PC-3 (cell line): ENCODE measurements at regions of chr3 and their contacts with region 1.

Region 1: GRCh38 chr3:144770915-144771351 is 799.3 kb downstream of the DIPK2A start:
- DNase-seq: peak; percentile 45
- ATAC-seq: peak; percentile 71
- H3K4me3 ChIP-seq: no peak overlapping the region
- H3K27ac ChIP-seq: no peak overlapping the region
- H3K4me1 ChIP-seq: no peaks in the 10 kb centered on the region
- H3K27me3 ChIP-seq: no peaks in the 10 kb centered on the region
- CTCF ChIP-seq: peak; percentile 54

Region 2: GRCh38 chr3:143895805-143896204 is 875.1 kb before region 1 on chr3:
- CTCF ChIA-PET with region 1: no interaction called
- POLR2A ChIA-PET with region 1: no interaction called
- intact Hi-C with region 1: loop called (anchors 1 kb)
- DNase-seq: peak; percentile 40
- ATAC-seq: no peak
- H3K4me3 ChIP-seq: no peak overlapping the region
- H3K27ac ChIP-seq: no peak overlapping the region
- H3K4me1 ChIP-seq: peaks cover 3% of the 10 kb centered on the region
- H3K27me3 ChIP-seq: no peaks in the 10 kb centered on the region
- CTCF ChIP-seq: peak; percentile 52; the same call in 1 of the 2 replicates

Region 3: GRCh38 chr3:145035682-145036081 is 264.7 kb after region 1 on chr3:
- CTCF ChIA-PET with region 1: no interaction called
- POLR2A ChIA-PET with region 1: no interaction called
- intact Hi-C with region 1: no loop called
- DNase-seq: no peak
- ATAC-seq: no peak
- H3K4me3 ChIP-seq: no peak overlapping the region
- H3K27ac ChIP-seq: no peak overlapping the region
- H3K4me1 ChIP-seq: 0 out of 2 replicates have a peak, but pooled peaks cover 3% of the 10 kb centered on the region
- H3K27me3 ChIP-seq: no peaks in the 10 kb centered on the region
- CTCF ChIP-seq: no peak

Region 4: DNA sequence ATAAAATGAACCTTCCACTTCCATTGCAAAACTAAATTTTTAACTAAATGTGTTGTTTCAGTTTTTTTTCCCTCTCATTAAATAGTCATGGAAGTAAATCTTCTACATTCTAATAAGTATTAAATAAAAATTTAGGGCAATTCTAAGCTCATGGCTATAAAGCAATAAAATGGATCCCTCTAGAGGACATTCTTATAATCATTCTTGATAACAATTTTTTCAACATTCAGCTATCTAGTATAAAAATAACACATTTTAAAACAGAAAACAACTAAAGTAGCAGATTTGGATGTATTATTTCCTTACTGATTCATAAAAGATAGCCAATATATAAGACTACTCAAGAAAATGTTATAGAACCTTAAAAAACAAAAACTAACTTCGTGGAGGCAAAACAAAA is 997.0 kb after region 1 on chr3:
- CTCF ChIA-PET with region 1: no interaction called
- POLR2A ChIA-PET with region 1: no interaction called
- intact Hi-C with region 1: loop called (anchors 10 kb)
- DNase-seq: peak; percentile 23
- ATAC-seq: no peak
- H3K4me3 ChIP-seq: no peak overlapping the region
- H3K27ac ChIP-seq: no peak overlapping the region
- H3K4me1 ChIP-seq: no peaks in the 10 kb centered on the region
- H3K27me3 ChIP-seq: no peaks in the 10 kb centered on the region
- CTCF ChIP-seq: peak; percentile 54